Kidney (tissue), 22 donors: ENCODE measurements at regions of chr3 and their contacts with region 1.

Region 1: DNA sequence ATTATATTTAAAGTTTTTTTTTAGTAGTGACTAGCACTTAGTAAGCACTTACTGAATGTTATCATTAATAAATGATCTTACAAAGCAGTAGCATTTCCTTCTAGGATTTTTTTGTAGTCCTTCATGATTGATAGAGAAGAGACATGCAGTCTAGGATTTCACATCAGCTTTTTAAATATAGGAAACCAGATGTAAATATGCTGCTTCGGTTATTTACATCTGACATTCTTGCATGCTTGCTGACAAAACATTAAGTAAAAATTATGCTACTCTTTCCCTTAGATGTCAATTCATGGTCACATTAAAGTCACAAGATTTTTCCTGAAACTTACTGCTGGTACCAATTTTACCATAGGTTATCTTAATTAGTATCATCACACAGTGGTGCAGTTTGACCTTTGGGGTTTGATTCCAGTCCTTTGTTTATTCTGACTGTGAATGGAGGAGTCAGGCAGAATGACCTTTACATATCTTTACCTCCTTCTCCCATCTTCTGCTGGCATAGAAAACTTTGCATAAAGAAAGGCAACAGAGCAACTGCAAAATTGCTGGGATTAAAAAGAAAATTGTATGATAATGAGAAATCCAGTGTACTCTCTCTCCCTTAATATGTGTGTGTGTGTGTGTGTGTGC is 286.5 kb downstream of the LPP start:
- DNase-seq: no peak
- H3K4me3 ChIP-seq: no peak overlapping the region
- H3K27ac ChIP-seq: no peak overlapping the region
- H3K4me1 ChIP-seq: peaks cover 0 to 4% (median 0%) of the 10 kb centered on the region in 3 donors
- H3K27me3 ChIP-seq: no peaks in the 10 kb centered on the region
- CTCF ChIP-seq: no peak

Region 2: GRCh38 chr3:188476935-188477334 is 36.5 kb after region 1 on chr3:
- intact Hi-C with region 1: loop called (anchors 5 kb)
- DNase-seq: peak in 2 of 5 donors; percentile 10 to 37
- H3K4me3 ChIP-seq: no peak overlapping the region
- H3K27ac ChIP-seq: no peak overlapping the region
- H3K4me1 ChIP-seq: peaks cover 0 to 8% (median 0%) of the 10 kb centered on the region in 3 donors
- H3K27me3 ChIP-seq: no peaks in the 10 kb centered on the region
- CTCF ChIP-seq: no peak